HCT116 (cell line): ENCODE measurements at regions of chr7 and their contacts with region 1.

Region 1: GRCh38 chr7:43341132-43341531 is 228.7 kb downstream of the HECW1 start:
- DNase-seq: no peak
- ATAC-seq: no peak
- H3K4me3 ChIP-seq: no peak overlapping the region
- H3K27ac ChIP-seq: no peak overlapping the region
- H3K4me1 ChIP-seq: no peaks in the 10 kb centered on the region
- H3K27me3 ChIP-seq: no peaks in the 10 kb centered on the region
- CTCF ChIP-seq: no peak
- POLR2A ChIP-seq: no peak
- RAD21 ChIP-seq: no peak

Region 2: GRCh38 chr7:43288391-43288790 is 52.7 kb before region 1 on chr7:
- CTCF ChIA-PET with region 1: no interaction called
- POLR2A ChIA-PET with region 1: no interaction called
- RAD21 ChIA-PET with region 1: no interaction called
- intact Hi-C with region 1: loop called (anchors 10 kb)
- DNase-seq: no peak
- ATAC-seq: no peak
- H3K4me3 ChIP-seq: no peak overlapping the region
- H3K27ac ChIP-seq: no peak overlapping the region
- H3K4me1 ChIP-seq: no peaks in the 10 kb centered on the region
- H3K27me3 ChIP-seq: no peaks in the 10 kb centered on the region
- CTCF ChIP-seq: no peak
- POLR2A ChIP-seq: no peak
- RAD21 ChIP-seq: no peak

Region 3: DNA sequence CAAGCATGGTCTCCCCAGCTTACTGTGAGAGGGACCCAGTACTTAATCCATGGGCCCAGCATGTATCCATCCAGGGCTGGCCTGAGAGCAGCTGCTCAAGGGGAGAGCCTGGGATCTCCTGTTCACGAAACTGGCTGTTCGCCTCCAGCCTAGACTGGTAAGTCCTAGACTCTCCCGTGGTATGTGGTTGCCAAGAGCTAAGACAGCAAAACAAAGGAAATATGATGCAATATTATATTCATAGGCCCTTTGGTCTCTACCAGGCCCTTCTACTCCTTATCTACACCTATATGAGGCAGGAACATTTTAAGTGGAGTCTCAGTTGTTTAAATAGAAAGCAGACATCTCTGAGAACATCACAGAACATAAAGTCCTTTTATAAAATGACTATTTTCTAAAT is 212.9 kb after region 1 on chr7:
- CTCF ChIA-PET with region 1: no interaction called
- POLR2A ChIA-PET with region 1: no interaction called
- RAD21 ChIA-PET with region 1: no interaction called
- intact Hi-C with region 1: no loop called
- DNase-seq: no peak
- ATAC-seq: no peak
- H3K4me3 ChIP-seq: no peak overlapping the region
- H3K27ac ChIP-seq: no peak overlapping the region
- H3K4me1 ChIP-seq: peaks cover 0 to 5% of the 10 kb centered on the region in 2 experiments; a peak in 1 of 4 replicates
- H3K27me3 ChIP-seq: 0 out of 2 replicates have a peak, but pooled peaks cover 3% of the 10 kb centered on the region
- CTCF ChIP-seq: no peak
- POLR2A ChIP-seq: no peak
- RAD21 ChIP-seq: no peak